ENCODE measurements at regions of chr9 and their contacts with region 1.

Region 1: DNA sequence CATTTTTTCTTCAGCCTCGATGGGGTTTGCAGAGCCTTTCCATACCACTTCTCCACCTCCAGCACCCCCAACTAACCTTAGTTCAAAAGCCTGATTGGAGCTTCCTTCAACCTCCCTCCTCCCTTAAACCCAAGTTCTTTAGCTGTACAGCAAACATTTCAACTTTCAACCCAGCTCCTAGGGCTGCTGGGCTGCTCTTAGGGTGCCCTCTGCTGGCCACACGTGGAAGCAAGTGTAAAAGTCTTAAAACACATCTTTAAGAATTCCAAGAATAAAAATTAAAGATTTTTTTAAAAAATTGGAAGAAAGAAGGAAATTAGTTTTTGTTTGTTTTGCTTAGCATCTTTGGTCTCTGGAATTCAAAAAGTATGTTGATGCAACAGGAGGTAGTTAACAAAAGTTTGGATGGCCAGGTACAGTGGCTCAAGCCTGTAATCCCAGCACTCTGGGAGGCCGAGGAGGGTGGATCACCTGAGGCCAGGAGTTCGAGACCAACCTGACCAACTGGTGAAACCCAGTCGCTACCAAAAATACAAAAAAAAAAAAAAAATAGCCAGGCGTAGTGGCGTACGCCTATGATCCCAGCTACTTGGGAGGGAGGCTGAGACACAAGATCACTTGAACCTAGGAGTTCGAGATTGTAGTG is 15.5 kb upstream of the HSD17B3 start:
- DNase-seq: peak; percentile 27
- ATAC-seq: peak; percentile 66
- H3K4me3 ChIP-seq: no peak overlapping the region
- H3K27ac ChIP-seq: no peak overlapping the region
- H3K4me1 ChIP-seq: no peaks in the 10 kb centered on the region
- H3K27me3 ChIP-seq: no peaks in the 10 kb centered on the region
- CTCF ChIP-seq: peak; percentile 81
- EP300 ChIP-seq: no peak
- POLR2A ChIP-seq: no peak
- RAD21 ChIP-seq: peak; percentile 37; the same call in 1 of the 2 replicates

Region 2: DNA sequence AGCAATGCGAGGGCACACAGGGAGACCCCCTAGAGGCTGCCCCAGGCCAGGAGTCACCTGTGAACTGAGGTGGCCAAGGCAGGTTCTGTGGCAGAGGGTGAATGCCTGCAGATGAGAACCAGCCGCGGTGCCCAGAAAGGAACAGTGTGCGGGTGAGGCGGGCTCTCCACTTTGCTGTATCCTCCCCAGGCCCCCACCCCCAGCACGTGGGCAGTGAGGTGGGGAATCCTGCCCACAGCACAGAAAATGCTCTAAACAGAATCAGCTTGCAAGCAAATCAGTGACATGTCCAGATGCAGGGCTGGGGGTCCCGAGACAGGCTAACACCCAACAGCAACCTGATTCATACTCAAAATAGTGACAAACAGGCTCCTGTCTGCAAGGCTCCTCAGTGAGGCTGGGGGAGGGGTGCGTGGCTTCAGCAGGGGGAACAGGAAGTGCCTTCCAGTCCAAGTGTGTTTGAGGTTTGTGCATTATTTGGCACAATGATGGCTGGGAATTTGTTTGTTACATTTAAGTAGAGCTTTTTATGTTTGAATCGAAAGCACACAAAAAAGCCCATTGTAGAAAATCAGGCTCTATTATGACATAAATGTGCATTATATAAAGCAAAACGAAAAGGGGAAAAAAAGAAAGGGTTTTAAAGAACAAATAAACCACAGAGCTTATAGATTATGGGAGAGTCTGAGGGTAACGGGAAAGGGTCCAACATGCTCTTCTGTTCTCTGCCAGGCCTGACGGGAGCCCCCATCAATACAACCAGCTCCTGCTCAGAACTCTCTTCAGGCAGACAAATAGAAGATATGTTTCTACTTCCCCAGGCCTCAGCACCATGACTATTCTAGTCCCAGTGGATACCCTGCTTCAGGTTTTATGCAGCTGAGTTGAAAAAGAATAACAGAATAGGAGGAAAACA is 216.8 kb before region 1 on chr9:
- CTCF ChIA-PET with region 1: no interaction called
- POLR2A ChIA-PET with region 1: no interaction called
- in situ Hi-C with region 1: no loop called
- intact Hi-C with region 1: no loop called
- DNase-seq: no peak
- ATAC-seq: no peak
- H3K4me3 ChIP-seq: no peak overlapping the region
- H3K27ac ChIP-seq: no peak overlapping the region
- H3K4me1 ChIP-seq: no peaks in the 10 kb centered on the region
- H3K27me3 ChIP-seq: no peaks in the 10 kb centered on the region
- CTCF ChIP-seq: no peak
- EP300 ChIP-seq: no peak
- POLR2A ChIP-seq: no peak
- RAD21 ChIP-seq: no peak

Region 3: DNA sequence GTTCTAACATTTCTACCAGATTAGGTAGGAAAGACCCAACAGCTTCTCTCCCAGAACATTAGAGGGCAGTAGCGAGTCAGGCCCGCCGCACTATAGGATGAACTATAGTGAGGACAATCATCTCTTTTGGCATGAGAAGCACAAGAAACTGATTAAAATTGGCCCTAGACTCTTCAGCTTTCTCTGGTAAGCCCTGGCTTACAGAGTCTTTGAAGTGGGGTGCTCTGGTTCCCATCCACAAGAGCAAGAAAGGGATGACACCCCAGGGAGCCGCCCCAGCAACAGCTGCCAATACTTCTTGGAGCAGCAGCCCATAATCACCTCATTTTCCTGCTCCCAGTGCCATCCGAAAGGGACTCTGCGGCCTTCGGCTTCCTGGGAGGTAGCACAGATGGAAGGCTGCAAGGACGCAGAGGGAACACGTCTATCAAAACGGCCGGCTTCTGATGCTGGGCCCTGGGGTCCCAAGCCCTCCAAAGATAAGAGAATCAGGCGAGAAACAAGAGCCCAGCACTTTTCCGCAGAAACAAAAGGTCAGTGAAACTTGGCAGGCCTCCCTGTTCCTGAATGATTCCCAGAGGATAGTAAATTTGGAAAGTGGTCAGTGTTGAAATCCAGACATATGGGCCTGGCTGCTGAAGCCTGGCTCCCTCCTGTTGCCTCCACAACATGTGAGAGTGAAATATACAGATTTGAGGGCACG is 84.8 kb before region 1 on chr9:
- CTCF ChIA-PET with region 1: interaction called, 15 read pairs
- POLR2A ChIA-PET with region 1: no interaction called
- in situ Hi-C with region 1: loop called (anchors 5 kb)
- intact Hi-C with region 1: loop called (anchors 1 kb)
- DNase-seq: peak; percentile 41
- ATAC-seq: peak; percentile 90
- H3K4me3 ChIP-seq: no peak overlapping the region
- H3K27ac ChIP-seq: no peak overlapping the region
- H3K4me1 ChIP-seq: no peaks in the 10 kb centered on the region
- H3K27me3 ChIP-seq: peaks cover 0 to 2% of the 10 kb centered on the region in 2 experiments; a peak in 1 of 5 replicates
- CTCF ChIP-seq: peak; percentile 81
- EP300 ChIP-seq: no peak
- POLR2A ChIP-seq: no peak
- RAD21 ChIP-seq: peak; percentile 21; the same call in 1 of the 2 replicates